GM12878 (cell line): ENCODE measurements at regions of chrX and their contacts with region 1.

Region 1: DNA sequence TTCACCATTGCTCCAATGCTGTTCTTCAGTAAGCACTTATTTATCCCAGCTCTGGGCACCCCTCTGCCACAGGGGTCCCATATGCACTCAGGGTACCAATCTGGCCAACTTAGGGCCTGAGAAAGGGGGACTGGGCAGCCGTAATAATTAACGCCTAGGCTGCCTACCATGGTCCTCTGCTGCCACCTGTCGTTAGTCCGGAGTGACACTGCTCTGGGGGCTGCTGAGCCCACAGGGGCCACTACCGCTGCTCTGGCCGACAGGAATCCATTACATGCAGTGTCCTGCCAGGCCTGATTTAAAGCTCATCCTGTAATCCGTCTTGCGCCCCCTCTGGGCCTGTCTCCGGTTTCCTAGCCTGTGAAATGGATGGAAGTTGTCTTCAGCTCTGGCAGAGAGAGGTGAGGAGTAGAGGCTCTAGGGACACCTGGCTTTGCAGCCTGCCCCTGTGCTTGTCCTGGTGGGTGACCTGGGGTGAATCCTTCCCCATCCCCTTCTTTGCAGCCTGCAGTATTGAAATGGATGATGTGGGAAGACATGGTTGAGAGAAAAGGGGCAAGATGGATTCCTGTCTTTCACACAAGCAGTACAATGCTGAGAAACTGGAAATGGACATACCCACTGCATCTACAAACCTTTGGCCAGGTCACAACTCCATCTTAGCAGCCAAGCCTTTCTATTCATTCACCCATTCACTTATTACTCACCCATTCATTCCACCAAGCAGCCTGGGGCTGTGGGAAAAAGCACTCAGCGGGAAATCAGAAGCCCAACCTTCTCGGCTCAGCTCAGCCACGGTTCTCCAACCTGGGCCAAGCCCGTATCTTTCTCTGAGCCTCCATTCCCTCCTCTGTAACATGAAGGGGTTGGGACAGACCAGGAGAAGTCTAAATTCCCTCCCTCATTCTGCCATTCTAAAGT is 116.3 kb upstream of the NALF2 start:
- DNase-seq: no peak
- ATAC-seq: peak; percentile 93
- H3K4me3 ChIP-seq: no peak overlapping the region
- H3K27ac ChIP-seq: no peak overlapping the region
- H3K4me1 ChIP-seq: no peaks in the 10 kb centered on the region
- H3K27me3 ChIP-seq: no peaks in the 10 kb centered on the region
- CTCF ChIP-seq: peak; percentile 72 to 79 (median 74)
- EP300 ChIP-seq: no peak
- POLR2A ChIP-seq: no peak
- RAD21 ChIP-seq: peak; percentile 72

Region 2: GRCh38 chrX:68504237-68504636 is 883.6 kb before region 1 on chrX:
- CTCF ChIA-PET with region 1: no interaction called
- POLR2A ChIA-PET with region 1: no interaction called
- RAD21 ChIA-PET with region 1: no interaction called
- SMC1A ChIA-PET with region 1: no interaction called
- in situ Hi-C with region 1: loop called (anchors 10 kb)
- intact Hi-C with region 1: no loop called
- DNase-seq: no peak
- ATAC-seq: peak; percentile 77
- H3K4me3 ChIP-seq: no peak overlapping the region
- H3K27ac ChIP-seq: no peak overlapping the region
- H3K4me1 ChIP-seq: no peaks in the 10 kb centered on the region
- H3K27me3 ChIP-seq: no peaks in the 10 kb centered on the region
- CTCF ChIP-seq: no peak
- EP300 ChIP-seq: no peak
- POLR2A ChIP-seq: no peak
- RAD21 ChIP-seq: no peak

Region 3: GRCh38 chrX:69093960-69094871 is 293.6 kb before region 1 on chrX:
- CTCF ChIA-PET with region 1: interaction called, 3 read pairs
- POLR2A ChIA-PET with region 1: no interaction called
- RAD21 ChIA-PET with region 1: no interaction called
- SMC1A ChIA-PET with region 1: no interaction called
- in situ Hi-C with region 1: no loop called
- intact Hi-C with region 1: loop called (anchors 1 kb)
- DNase-seq: no peak
- ATAC-seq: peak; percentile 86
- H3K4me3 ChIP-seq: no peak overlapping the region
- H3K27ac ChIP-seq: no peak overlapping the region
- H3K4me1 ChIP-seq: no peaks in the 10 kb centered on the region
- H3K27me3 ChIP-seq: no peaks in the 10 kb centered on the region; a peak in 1 of 4 replicates
- CTCF ChIP-seq: peak; percentile 49 to 64 (median 56)
- EP300 ChIP-seq: no peak
- POLR2A ChIP-seq: no peak
- RAD21 ChIP-seq: peak; percentile 18; the same call in 1 of the 2 replicates

Region 4: GRCh38 chrX:69158166-69158980 is 229.5 kb before region 1 on chrX:
- CTCF ChIA-PET with region 1: no interaction called
- POLR2A ChIA-PET with region 1: no interaction called
- RAD21 ChIA-PET with region 1: no interaction called
- SMC1A ChIA-PET with region 1: no interaction called
- in situ Hi-C with region 1: no loop called
- intact Hi-C with region 1: loop called (anchors 10 kb)
- DNase-seq: no peak
- ATAC-seq: peak; percentile 98
- H3K4me3 ChIP-seq: no peak overlapping the region
- H3K27ac ChIP-seq: no peak overlapping the region
- H3K4me1 ChIP-seq: no peaks in the 10 kb centered on the region; the same call in 1 of the 2 replicates
- H3K27me3 ChIP-seq: no peaks in the 10 kb centered on the region
- CTCF ChIP-seq: peak; percentile 45 to 64 (median 54)
- EP300 ChIP-seq: no peak
- POLR2A ChIP-seq: no peak
- RAD21 ChIP-seq: peak; percentile 45

Region 5: DNA sequence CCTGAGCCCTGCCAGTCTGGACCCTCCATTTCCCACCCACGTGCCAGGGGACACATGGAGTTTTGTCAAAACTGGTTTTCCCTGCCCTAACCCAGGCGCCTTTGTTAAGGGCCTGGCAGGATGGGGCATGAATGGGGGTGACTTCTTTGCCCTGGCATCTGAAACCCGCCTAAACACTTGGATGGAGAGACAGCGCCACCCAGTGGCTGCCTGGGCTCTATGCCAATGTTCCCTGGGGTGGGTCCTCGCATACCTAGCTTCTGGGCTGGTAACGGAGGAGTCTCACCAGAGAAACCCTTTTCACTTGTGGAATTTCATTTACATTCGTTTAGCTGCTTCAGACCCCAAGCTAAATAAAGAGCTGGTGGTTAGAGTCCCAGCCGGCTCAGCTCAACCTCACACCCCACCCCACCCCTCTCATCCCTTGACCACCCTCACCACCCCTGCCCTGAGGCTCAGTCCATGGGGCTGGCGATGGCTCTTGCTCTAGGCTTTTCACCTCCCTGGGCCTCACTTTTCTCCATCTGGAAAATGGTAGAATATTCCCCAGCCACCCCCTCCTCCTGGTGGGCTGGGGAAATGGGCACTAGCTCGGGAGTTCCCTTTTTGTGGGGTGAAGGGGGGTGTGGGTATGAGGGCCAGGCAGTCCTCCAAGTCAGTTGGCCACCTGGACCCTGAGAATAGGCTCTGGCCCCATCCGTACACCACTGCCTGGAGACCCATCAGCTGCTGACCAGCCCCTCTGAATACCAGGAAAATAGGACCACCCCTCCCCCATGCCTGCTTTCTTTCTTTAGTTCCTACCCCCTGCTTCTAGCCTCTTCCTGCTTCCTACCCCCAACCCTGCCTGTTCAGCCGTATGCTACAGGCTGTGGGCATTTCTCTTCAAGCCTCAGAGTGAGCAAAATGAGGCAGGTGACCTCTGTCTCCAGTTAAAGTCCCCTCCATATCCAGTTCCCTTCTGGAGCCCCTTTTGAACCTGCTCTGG is 165.4 kb before region 1 on chrX:
- CTCF ChIA-PET with region 1: no interaction called
- POLR2A ChIA-PET with region 1: no interaction called
- RAD21 ChIA-PET with region 1: no interaction called
- SMC1A ChIA-PET with region 1: no interaction called
- in situ Hi-C with region 1: no loop called
- intact Hi-C with region 1: loop called (anchors 2 kb)
- DNase-seq: no peak
- ATAC-seq: peak; percentile 95
- H3K4me3 ChIP-seq: no peak overlapping the region
- H3K27ac ChIP-seq: no peak overlapping the region
- H3K4me1 ChIP-seq: no peaks in the 10 kb centered on the region
- H3K27me3 ChIP-seq: no peaks in the 10 kb centered on the region; a peak in 2 of 4 replicates
- CTCF ChIP-seq: peak; percentile 64 to 73 (median 71)
- EP300 ChIP-seq: no peak
- POLR2A ChIP-seq: no peak
- RAD21 ChIP-seq: peak; percentile 83